Esophagus muscularis mucosa (tissue), 4 donors: ENCODE measurements at regions of chr6 and their contacts with region 1.

Region 1: DNA sequence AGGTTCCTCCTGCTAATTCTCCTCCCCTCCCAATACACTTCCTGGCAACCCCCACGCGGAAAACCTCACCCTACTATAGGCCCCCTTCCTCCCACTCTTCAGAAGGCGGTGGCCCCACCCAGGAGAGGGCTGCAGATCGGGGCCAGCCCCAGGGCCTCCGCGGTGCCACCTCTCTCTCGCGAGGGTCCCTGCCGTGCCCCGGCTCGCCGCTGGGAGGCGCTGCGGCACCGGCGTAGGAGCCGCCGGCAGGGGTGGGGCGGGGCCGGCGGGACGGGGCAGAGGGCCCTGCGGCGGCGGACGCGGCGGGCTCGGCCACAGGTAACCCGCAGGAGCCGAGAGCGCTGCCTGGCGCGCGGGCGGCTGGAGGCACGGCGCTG is at the start of gene ANKRD6:
- DNase-seq: no peak
- H3K4me3 ChIP-seq: peak within 1 kb of the TSS; percentile 75 to 95 (median 86)
- H3K27ac ChIP-seq: peak within 1 kb of the TSS; percentile 30 to 58 (median 46)
- H3K4me1 ChIP-seq: peaks cover 0 to 24% (median 15%) of the 10 kb centered on the region in 4 donors
- H3K27me3 ChIP-seq: no peaks in the 10 kb centered on the region
- CTCF ChIP-seq: peak in 2 of 3 experiments; percentile 90 to 98
- EP300 ChIP-seq: no peak
- POLR2A ChIP-seq: no peak
- total RNA-seq, gene ANKRD6: 9.1 to 18.9 (median 10.7) TPM

Region 2: DNA sequence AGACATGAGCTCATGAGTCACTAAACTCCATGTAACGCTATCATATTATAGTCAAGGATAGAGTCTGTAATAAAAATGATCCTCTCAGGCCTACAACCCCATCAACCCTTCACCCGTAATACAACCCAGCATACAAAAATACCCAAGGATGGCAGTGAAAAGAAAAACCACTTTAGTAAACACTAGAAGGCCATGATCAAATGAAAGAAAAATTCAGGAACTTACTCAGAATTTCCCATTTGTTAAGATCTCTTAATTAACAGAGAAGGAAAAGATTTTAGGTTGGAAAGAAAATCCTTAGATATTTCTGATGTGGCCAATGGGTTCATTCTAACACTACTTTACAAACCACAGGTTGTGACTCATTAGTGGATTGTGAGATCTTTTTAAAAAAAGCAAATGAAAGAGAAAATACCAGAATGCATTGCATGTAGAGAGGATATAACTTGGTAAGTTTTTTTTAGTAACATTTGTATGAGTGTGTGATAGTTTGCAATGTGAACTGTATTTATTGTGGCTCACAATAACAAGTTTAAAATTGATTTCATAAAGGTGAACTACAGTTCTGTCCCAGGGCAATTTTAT is 72.4 kb before region 1 on chr6:
- intact Hi-C with region 1: no loop called
- DNase-seq: no peak
- H3K4me3 ChIP-seq: no peak overlapping the region
- H3K27ac ChIP-seq: no peak overlapping the region
- H3K4me1 ChIP-seq: no peaks in the 10 kb centered on the region
- H3K27me3 ChIP-seq: no peaks in the 10 kb centered on the region
- CTCF ChIP-seq: no peak
- EP300 ChIP-seq: no peak
- POLR2A ChIP-seq: no peak

Region 3: GRCh38 chr6:89610149-89610642 is 177.3 kb after region 1 on chr6:
- intact Hi-C with region 1: loop called (anchors 2 kb)
- DNase-seq: no peak
- H3K4me3 ChIP-seq: no peak overlapping the region
- H3K27ac ChIP-seq: no peak overlapping the region
- H3K4me1 ChIP-seq: no peaks in the 10 kb centered on the region
- H3K27me3 ChIP-seq: no peaks in the 10 kb centered on the region
- CTCF ChIP-seq: peak; percentile 77 to 87 (median 82)
- EP300 ChIP-seq: no peak
- POLR2A ChIP-seq: no peak